ENCODE measurements at regions of chr11 and their contacts with region 1.

Region 1: GRCh38 chr11:8092587-8093424 is 11.8 kb downstream of the TUB start:
- DNase-seq: no peak
- H3K4me3 ChIP-seq: no peak overlapping the region
- CTCF ChIP-seq: peak; percentile 76

Region 2: GRCh38 chr11:7892840-7893254 is 200.0 kb before region 1 on chr11:
- CTCF ChIA-PET with region 1: interaction called, 45 read pairs
- POLR2A ChIA-PET with region 1: no interaction called
- DNase-seq: peak; percentile 28
- H3K4me3 ChIP-seq: no peak overlapping the region
- CTCF ChIP-seq: peak; percentile 56

Region 3: DNA sequence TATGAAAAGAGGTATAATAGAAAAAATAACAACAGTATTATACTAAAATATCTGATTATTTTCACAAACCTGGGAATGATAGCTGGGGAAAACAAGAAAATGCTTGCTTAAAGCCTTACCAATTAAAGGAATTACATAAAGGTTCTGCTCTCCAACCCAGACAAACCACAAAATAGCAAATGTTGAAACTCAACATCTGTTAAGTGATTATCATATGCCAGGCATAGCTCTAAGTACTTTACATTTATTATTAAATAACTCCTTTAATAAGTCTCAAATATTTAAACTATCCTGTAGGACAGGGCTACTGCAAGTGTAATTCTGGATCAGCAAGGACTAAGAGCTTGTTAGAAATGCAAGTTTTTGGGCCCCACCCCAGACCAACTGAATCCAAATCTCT is 181.8 kb before region 1 on chr11:
- CTCF ChIA-PET with region 1: no interaction called
- POLR2A ChIA-PET with region 1: no interaction called
- DNase-seq: no peak
- H3K4me3 ChIP-seq: no peak overlapping the region
- CTCF ChIP-seq: no peak

Region 4: DNA sequence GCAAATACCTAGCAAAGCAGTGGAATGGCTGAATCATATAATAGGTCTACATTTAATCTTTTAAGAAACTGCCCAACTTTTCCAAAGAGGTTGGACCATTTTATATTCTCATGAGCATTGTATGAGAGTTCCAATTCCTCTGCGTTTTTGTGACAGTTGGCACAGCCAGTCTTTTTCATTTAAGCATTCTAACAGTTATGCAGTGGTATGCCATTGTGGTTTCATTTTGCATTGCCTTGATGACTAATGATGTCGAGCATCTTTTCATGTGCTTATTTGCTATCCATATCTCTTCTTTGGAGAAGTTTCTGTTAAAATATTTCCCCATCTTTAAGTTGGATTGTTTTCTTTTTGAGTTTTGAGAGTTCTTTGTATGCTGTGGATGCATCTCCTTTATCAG is 67.0 kb before region 1 on chr11:
- CTCF ChIA-PET with region 1: interaction called, 694 read pairs
- POLR2A ChIA-PET with region 1: no interaction called
- DNase-seq: peak; percentile 64
- H3K4me3 ChIP-seq: no peak overlapping the region
- CTCF ChIP-seq: no peak

Region 5: GRCh38 chr11:8056810-8057463 is 35.9 kb before region 1 on chr11:
- CTCF ChIA-PET with region 1: interaction called, 29 read pairs
- POLR2A ChIA-PET with region 1: no interaction called
- DNase-seq: peak; percentile 29
- H3K4me3 ChIP-seq: no peak overlapping the region
- CTCF ChIP-seq: no peak

Region 6: DNA sequence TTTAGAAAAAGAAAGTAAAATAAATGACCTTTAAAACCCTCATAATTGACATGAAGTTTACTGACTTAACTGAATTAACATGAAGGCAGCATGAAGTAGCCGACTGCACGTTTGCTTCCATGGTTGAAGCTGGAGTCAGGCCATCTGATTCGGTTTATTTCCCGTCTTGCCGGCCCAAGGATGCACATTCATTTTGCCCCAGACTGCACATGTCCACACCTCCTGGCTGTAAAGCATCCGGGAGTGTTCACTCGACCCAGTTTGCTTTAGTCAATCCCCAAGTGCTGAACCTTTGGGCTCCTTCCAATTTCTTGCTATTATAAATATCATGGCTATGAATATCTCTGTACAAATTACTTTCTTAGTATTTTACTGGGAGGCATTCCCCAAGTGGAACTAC is 29.5 kb before region 1 on chr11:
- CTCF ChIA-PET with region 1: interaction called, 126 read pairs
- POLR2A ChIA-PET with region 1: no interaction called
- DNase-seq: no peak
- H3K4me3 ChIP-seq: no peak overlapping the region
- CTCF ChIP-seq: no peak

Region 7: DNA sequence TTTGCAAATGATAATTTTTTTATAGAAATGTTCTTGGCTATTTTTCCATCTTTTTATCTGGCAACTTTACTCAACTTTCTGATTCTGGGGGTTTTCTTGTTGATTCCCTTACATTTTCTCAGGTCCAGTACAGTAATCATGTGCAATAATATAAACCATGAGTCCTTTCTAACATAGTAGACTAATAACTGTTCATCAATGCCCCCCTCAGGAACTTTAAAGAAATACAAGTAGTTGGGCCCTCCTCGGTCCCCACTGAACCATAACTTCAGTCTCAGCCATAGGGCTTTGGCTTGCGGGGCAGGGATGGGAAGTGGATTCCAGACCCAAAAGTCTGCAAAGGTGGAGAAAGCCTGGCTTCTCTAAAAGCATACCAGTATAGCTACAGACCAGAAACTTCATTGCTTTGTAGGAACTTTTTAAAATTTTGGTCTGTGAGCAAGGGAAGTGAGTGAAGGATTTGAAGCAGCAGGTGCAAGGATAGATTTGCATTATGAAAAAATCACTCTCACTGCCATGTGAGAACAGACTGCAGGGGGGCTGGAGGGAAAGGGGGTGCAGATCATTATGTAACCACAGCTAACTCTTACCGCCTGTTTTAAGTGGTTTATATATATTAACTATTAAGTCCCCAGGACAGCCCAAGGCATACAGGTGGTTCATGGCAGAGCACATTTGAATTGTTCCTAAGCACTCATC is 22.2 kb before region 1 on chr11:
- CTCF ChIA-PET with region 1: interaction called, 126 read pairs
- POLR2A ChIA-PET with region 1: no interaction called
- DNase-seq: no peak
- H3K4me3 ChIP-seq: no peak overlapping the region
- CTCF ChIP-seq: peak; percentile 23

Measured in AG04449 (cell line).